Motor neuron (in vitro differentiated cells): ENCODE measurements at regions of chr2 and their contacts with region 1.

Region 1: DNA sequence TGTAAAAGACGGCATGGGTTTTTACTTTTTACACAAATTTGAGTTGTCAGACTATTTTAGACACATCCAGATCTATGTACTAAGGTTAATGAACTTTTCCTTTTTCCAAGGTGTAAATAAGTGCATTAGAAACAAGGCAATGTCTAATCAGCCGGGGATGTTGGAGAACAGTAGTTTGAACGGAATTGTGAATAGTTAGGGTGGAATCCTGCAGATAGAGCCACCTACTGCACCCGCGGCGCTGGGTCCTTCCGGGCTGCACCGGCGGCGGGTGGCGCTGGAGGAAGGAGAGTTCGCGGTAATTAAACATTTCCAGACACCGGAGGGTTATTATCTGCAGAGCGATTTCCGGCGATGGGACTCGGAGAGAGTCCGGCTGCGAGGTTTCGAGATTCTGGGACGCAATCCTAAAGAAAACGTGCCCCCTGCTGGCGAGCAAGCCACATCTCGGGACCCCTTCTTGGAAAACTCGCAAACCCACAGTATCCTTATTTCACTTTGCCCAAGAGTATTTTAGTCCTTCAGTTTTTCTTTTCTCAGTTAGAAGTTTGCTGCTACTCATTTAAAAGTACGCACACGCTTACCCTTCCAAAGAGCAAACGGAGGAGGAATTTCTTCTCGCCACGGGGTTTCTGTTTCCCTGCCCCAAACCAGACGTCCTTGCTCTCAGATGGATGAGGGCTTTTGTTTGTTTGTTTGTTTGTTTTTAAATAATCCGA is 4.5 kb upstream of the OSR1 start:
- ATAC-seq: peak; percentile 46 to 66 (median 63)
- H3K4me3 ChIP-seq: peak overlapping the region in 4 of 5 donors; percentile 8 to 24 (median 18)
- H3K27ac ChIP-seq: no peak overlapping the region
- H3K4me1 ChIP-seq: peaks cover 9 to 10% of the 10 kb centered on the region in 2 donors

Region 2: GRCh38 chr2:18435421-18436037 is 927.4 kb before region 1 on chr2:
- in situ Hi-C with region 1: loop called in 3 of 9 experiments (anchors 25 kb)
- ATAC-seq: peak in 3 of 8 experiments; percentile 44 to 63 (median 49)
- H3K4me3 ChIP-seq: no peak overlapping the region
- H3K27ac ChIP-seq: no peak overlapping the region
- H3K4me1 ChIP-seq: peaks cover 8 to 10% of the 10 kb centered on the region in 2 donors

Region 3: GRCh38 chr2:18520451-18521425 is 842.2 kb before region 1 on chr2:
- in situ Hi-C with region 1: loop called in 4 of 9 experiments (anchors 25 kb)
- ATAC-seq: peak; percentile 78 to 98 (median 96)
- H3K4me3 ChIP-seq: no peak overlapping the region
- H3K27ac ChIP-seq: no peak overlapping the region
- H3K4me1 ChIP-seq: no peaks in the 10 kb centered on the region

Region 4: DNA sequence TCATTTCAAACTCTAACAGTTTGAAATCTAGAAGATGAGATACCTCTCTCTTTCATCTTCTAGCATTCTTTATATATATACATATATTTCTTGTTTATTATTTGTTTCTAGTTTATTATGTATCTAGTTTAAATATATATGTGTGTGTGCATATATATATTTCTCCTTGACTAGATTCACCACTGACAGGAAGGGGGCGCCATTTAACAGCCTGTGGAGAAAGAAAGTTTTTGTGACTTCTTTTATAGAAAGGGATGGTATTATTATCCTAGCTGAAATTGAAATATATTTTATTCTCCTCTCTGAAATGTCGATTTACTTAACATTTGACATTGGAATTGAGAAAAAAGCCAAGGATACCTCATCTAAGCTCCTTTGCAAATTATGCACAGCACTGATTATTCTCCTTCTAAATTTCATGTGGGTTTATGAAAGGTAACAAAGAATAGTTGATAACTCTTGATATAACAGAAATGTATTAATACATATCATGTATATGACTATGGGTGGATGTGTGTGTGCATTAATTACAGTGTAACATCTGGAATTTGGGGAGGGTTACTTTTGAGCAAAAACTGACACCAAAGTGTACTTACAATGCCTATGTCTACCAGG is 612.9 kb before region 1 on chr2:
- in situ Hi-C with region 1: loop called in 4 of 9 experiments (anchors 25 kb)
- ATAC-seq: peak in 3 of 8 experiments; percentile 26 to 54 (median 49)
- H3K4me3 ChIP-seq: no peak overlapping the region
- H3K27ac ChIP-seq: no peak overlapping the region
- H3K4me1 ChIP-seq: no peaks in the 10 kb centered on the region

Region 5: GRCh38 chr2:18883616-18884456 is 479.1 kb before region 1 on chr2:
- in situ Hi-C with region 1: loop called in 1 of 9 experiments (anchors 25 kb)
- ATAC-seq: peak in 4 of 8 experiments; percentile 15 to 53 (median 43)
- H3K4me3 ChIP-seq: no peak overlapping the region
- H3K27ac ChIP-seq: no peak overlapping the region
- H3K4me1 ChIP-seq: no peaks in the 10 kb centered on the region

Region 6: GRCh38 chr2:19675856-19676460 is 313.0 kb after region 1 on chr2:
- in situ Hi-C with region 1: loop called in 1 of 9 experiments (anchors 25 kb)
- ATAC-seq: peak in 3 of 8 experiments; percentile 78 to 97 (median 93)
- H3K4me3 ChIP-seq: no peak overlapping the region
- H3K27ac ChIP-seq: no peak overlapping the region
- H3K4me1 ChIP-seq: no peaks in the 10 kb centered on the region